Cardiac septum (tissue), 1 donor: ENCODE measurements at regions of chr6 and their contacts with region 1.

Region 1: GRCh38 chr6:71482742-71483141 is 194.1 kb downstream of the OGFRL1 start:
- DNase-seq: no peak

Region 2: DNA sequence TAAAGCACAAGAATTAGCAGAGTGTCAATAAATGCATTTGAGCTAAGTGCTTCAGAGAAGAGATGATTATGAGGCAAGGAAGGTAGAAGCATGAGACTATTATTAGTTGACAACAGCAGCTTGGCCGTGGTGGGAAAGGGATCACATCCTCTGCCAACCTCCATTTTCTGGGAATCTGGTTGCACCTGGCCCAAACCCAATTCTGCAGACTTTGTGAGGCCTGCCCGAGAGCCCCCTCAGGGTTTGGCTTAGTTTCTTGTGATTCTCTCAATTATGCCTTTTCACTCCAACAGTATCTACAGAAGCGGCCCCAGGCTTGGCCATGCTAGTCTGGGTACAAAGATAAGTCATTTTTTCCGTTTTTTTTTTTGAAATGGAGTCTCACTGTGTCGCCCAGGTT is 414.9 kb before region 1 on chr6:
- intact Hi-C with region 1: no loop called
- DNase-seq: no peak

Region 3: GRCh38 chr6:71393981-71394432 is 88.7 kb before region 1 on chr6:
- intact Hi-C with region 1: loop called (anchors 5 kb)
- DNase-seq: no peak